Gastrocnemius medialis (tissue), 4 donors: ENCODE measurements at regions of chr7 and their contacts with region 1.

Region 1: GRCh38 chr7:5677538-5678294 is 103.7 kb downstream of the RNF216 start:
- DNase-seq: peak in 1 of 2 donors; percentile 52
- ATAC-seq: peak; percentile 59 to 75
- H3K4me3 ChIP-seq: no peak overlapping the region
- H3K27ac ChIP-seq: peak overlapping the region in 1 of 4 donors; percentile 22
- H3K4me1 ChIP-seq: peaks cover 20 to 27% of the 10 kb centered on the region in 2 donors
- H3K27me3 ChIP-seq: no peaks in the 10 kb centered on the region
- CTCF ChIP-seq: peak; percentile 33 to 66 (median 60)
- POLR2A ChIP-seq: no peak

Region 2: DNA sequence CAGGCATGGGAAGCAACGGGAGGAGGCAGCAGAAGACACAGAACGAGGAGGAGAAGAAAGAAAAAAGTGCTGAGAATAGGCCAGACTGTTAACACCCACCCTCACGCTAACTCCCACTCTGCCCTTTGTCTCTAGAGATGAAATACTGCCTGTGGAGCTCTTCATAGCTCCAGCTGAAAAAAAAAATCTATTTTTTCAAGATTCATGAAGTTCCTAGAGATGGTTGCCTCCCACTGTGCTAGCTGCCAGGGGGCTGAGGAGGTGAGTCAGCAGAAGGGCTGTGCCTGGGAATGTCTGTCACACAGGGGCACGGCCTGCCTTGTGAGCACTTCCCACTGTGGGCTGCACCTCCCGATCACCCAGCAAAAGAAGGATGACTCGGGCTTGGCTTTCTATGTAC is 40.8 kb before region 1 on chr7:
- in situ Hi-C with region 1: no loop called
- intact Hi-C with region 1: no loop called
- DNase-seq: peak; percentile 30 to 40
- ATAC-seq: peak; percentile 31
- H3K4me3 ChIP-seq: no peak overlapping the region
- H3K27ac ChIP-seq: peak overlapping the region in 1 of 4 donors; percentile 50
- H3K4me1 ChIP-seq: peaks cover 32 to 42% of the 10 kb centered on the region in 2 donors
- H3K27me3 ChIP-seq: no peaks in the 10 kb centered on the region
- CTCF ChIP-seq: no peak
- POLR2A ChIP-seq: no peak

Region 3: GRCh38 chr7:5652118-5652517 is 25.6 kb before region 1 on chr7:
- in situ Hi-C with region 1: no loop called
- intact Hi-C with region 1: loop called (anchors 1 kb)
- DNase-seq: no peak
- ATAC-seq: no peak
- H3K4me3 ChIP-seq: no peak overlapping the region
- H3K27ac ChIP-seq: no peak overlapping the region
- H3K4me1 ChIP-seq: peaks cover 0 to 4% of the 10 kb centered on the region in 2 donors
- H3K27me3 ChIP-seq: no peaks in the 10 kb centered on the region
- CTCF ChIP-seq: no peak
- POLR2A ChIP-seq: no peak

Region 4: DNA sequence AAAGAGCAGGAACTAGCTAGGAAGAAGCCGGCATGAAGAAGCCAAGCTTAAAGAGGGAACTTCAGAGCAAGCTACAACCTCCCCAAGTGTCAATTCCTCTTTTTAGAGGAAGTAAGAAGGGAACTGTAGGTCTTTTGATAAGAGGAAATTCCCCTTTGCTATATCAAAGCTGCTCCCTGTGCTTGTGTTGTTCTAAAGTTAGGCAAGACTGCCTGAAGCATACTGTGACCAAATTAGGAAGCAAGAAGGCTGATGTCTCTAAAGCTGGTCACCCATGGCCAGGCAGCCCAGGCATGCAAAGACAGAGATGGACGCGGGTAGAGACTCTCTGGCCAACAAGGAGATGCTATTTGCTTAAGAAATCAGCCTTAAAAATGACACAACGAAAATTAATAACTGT is 15.8 kb after region 1 on chr7:
- in situ Hi-C with region 1: no loop called
- intact Hi-C with region 1: no loop called
- DNase-seq: peak in 1 of 2 donors; percentile 35
- ATAC-seq: peak in 1 of 2 donors; percentile 38
- H3K4me3 ChIP-seq: no peak overlapping the region
- H3K27ac ChIP-seq: peak overlapping the region; percentile 83 to 89 (median 86)
- H3K4me1 ChIP-seq: peaks cover 74 to 86% of the 10 kb centered on the region in 2 donors
- H3K27me3 ChIP-seq: no peaks in the 10 kb centered on the region
- CTCF ChIP-seq: no peak
- POLR2A ChIP-seq: peak in 1 of 2 donors; percentile 7